Posterior vena cava (tissue), 2 donors: ENCODE measurements at regions of chr15 and their contacts with region 1.

Region 1: GRCh38 chr15:38886315-38887171 is 321.9 kb upstream of the RASGRP1 start:
- DNase-seq: no peak

Region 2: DNA sequence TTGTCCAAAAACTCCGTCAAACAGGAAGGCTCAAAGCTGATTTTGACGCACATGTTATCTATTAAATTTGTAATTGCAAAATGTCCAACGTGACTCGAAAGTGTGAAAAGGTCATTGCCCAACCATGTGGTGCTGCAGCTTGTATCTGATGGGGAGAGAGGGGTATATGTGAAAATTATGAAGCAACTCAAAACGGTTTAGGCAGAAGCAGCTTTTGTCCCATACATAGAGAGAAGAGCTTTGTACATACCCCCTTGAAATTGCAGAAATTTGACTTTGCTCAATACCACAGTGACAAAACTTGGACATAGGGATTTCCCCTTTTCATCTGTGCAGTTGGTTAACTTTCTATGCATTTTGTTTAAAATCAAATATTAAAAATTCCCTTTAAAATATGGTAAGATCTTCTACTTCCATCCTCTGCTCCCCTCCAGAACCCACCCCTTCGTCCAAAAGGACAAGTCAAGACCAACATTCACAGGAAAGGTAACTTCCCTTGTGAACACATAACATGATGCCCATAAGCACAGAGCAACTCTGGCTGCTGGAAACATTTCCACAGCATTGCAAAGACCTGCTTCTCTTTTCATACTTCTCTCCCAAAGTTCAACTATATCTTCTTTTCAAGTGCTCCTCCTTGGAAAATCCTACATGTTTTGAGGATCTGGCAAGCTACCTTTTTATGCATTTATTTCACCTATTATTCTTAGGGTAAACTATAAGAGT is 440.6 kb after region 1 on chr15:
- intact Hi-C with region 1: loop called in 1 of 2 experiments (anchors 10 kb)
- DNase-seq: no peak